ENCODE measurements at regions of chr3 and their contacts with region 1.

Region 1: DNA sequence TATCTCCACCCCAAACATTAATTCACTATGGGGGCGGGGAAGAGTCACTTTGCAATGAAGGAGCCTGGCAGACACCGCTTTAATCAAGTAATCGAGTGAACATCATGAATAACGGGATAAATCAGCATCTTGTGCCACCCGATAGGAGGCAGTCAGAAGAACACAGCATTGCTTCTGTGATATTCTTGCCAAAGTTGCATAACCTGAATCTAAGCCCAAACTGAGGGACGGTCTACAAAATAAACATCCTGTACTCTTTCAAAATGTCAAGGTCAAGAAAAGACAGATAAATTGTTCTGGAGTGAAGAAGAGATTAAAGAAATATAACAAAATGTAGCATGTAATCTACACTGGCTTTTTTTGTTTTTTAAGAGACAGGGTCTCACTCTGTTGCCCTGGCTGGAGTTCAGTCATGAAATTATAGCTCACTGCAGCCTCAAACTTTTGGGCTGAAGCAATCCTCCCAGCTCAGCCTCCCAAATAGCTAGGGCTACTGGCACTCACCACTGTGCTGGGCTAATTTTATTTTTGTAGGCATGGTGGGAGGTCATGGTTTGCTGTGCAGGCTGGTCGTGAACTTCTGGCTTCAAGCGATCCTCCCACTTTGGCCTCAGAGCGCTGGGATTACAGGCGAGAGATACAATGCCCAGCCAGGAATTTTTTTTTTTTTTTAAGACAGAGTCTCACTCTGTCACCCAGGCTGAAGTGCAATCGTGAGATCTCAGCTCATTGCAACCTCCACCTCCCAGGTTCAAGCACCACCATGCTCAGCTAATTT is 20.1 kb upstream of the VWA5B2 start:
- DNase-seq: no peak
- ATAC-seq: no peak
- H3K4me3 Mint-ChIP-seq: no peak overlapping the region
- H3K27ac Mint-ChIP-seq: no peak overlapping the region
- H3K4me1 Mint-ChIP-seq: no peaks in the 10 kb centered on the region
- H3K27me3 Mint-ChIP-seq: peaks cover 12 to 24% (median 14%) of the 10 kb centered on the region in 5 donors

Region 2: GRCh38 chr3:184335661-184336546 is 126.6 kb after region 1 on chr3:
- POLR2A ChIA-PET with region 1: no interaction called
- DNase-seq: peak; percentile 78 to 92 (median 90)
- ATAC-seq: peak; percentile 75 to 77
- H3K4me3 Mint-ChIP-seq: peak overlapping the region; percentile 80 to 96 (median 92)
- H3K27ac Mint-ChIP-seq: peak overlapping the region; percentile 83 to 99 (median 97)
- H3K4me1 Mint-ChIP-seq: peaks cover 23 to 44% (median 42%) of the 10 kb centered on the region in 4 donors
- H3K27me3 Mint-ChIP-seq: no peaks in the 10 kb centered on the region

Region 3: DNA sequence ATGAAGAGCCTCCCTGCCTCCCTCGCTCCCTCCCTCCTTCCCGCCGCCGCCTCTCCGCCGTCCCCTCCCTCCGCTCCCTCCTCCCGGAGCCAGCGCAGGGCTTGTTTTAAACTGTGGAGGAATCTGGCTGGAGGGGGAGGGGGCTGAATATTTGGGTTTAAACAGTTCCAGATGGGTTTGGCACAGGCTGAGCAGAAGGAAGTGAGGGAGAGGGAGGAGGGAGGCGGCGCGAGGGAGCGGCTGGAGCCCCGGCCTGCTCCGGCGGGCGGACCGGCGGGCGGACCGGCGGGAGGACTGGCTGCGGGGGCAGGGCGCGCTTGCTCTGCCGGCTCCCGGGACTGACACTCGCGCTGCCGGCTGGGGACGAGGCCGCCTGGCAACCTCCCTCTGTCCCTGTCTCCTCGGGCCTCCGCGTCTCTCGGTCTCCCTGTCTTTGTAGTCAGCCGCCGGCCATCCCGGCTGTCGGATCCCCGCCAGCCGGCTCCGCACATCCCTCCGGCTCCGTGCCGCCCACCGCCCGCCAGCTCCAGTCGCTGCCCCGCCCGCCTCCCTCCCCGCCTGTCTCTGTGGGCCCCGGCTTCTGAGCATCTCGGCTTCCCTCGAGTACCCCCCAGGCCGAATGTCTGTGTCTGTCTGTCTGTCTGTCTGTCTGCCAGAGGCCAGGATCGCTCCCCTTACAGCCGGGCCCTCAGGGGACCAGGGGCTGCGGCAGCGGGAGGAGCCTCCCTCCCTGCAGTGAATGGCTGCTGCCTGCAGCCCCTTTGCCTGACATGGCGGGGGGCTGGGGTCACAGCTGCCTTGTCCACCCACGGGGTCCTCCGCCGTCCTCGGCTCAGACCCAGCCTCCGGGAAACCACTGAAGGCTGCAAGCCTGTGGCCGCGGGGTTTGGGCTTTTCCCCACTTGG is 359.8 kb after region 1 on chr3:
- POLR2A ChIA-PET with region 1: interaction called, 10 read pairs
- DNase-seq: no peak
- ATAC-seq: peak; percentile 27 to 72
- H3K4me3 Mint-ChIP-seq: peak overlapping the region; percentile 32 to 71 (median 60)
- H3K27ac Mint-ChIP-seq: no peak overlapping the region
- H3K4me1 Mint-ChIP-seq: peaks cover 2 to 21% (median 8%) of the 10 kb centered on the region in 4 donors
- H3K27me3 Mint-ChIP-seq: peaks cover 17 to 50% (median 37%) of the 10 kb centered on the region in 5 donors

Measured in naive thymus-derived CD8-positive, alpha-beta T cell (primary cell).